GM12878 (cell line): ENCODE measurements at regions of chr6 and their contacts with region 1.

Region 1: GRCh38 chr6:138891255-138891986 is 95.5 kb downstream of the ECT2L start:
- DNase-seq: no peak
- ATAC-seq: no peak
- H3K4me3 ChIP-seq: no peak overlapping the region
- H3K27ac ChIP-seq: no peak overlapping the region
- H3K4me1 ChIP-seq: peaks cover 12% of the 10 kb centered on the region
- H3K27me3 ChIP-seq: no peaks in the 10 kb centered on the region
- CTCF ChIP-seq: no peak
- EP300 ChIP-seq: no peak
- POLR2A ChIP-seq: no peak
- RAD21 ChIP-seq: no peak

Region 2: DNA sequence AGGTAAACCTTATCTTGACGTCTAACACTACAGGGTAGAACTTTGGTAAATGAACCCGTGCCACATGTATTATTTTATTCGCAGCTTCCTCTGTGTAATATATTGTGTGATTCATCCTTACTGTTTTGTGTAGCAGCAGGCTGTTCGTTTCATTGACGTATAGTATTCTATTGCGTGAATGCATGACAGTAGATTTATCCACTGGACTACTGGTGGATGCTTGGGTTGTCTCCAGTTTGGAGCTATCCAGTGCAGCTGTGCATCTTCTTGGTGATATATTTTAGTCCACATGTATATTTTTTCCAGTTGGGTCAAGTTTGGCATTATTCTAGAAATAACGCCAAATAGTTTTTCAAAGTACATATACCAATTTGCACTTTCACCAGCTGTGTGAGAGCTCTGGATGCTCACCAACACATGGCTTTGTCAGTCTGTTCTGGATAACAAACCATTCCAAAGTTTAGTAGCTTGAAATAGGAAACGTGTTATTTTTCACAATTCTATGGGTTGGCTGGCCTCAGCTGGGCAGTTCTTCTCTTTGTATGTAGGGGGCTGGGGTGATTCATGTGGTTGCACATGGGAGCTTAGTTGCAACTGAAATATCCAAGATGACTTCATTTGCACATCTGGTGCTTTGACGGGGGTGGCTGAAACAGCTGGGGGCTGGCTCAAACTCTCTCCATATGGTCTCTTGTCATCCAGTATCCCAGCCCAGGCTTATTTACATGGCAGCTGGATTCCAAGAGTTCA is 86.2 kb before region 1 on chr6:
- CTCF ChIA-PET with region 1: no interaction called
- POLR2A ChIA-PET with region 1: no interaction called
- RAD21 ChIA-PET with region 1: no interaction called
- SMC1A ChIA-PET with region 1: no interaction called
- in situ Hi-C with region 1: no loop called
- intact Hi-C with region 1: no loop called
- DNase-seq: no peak
- ATAC-seq: no peak
- H3K4me3 ChIP-seq: no peak overlapping the region
- H3K27ac ChIP-seq: no peak overlapping the region
- H3K4me1 ChIP-seq: no peaks in the 10 kb centered on the region
- H3K27me3 ChIP-seq: no peaks in the 10 kb centered on the region; a peak in 1 of 4 replicates
- CTCF ChIP-seq: no peak
- EP300 ChIP-seq: no peak
- POLR2A ChIP-seq: no peak
- RAD21 ChIP-seq: no peak

Region 3: GRCh38 chr6:138907167-138907566 is 15.7 kb after region 1 on chr6:
- CTCF ChIA-PET with region 1: interaction called, 3 read pairs
- POLR2A ChIA-PET with region 1: interaction called, 9 read pairs
- RAD21 ChIA-PET with region 1: interaction called, 5 read pairs
- SMC1A ChIA-PET with region 1: interaction called, 13 read pairs
- in situ Hi-C with region 1: no loop called
- intact Hi-C with region 1: no loop called
- DNase-seq: no peak
- ATAC-seq: no peak
- H3K4me3 ChIP-seq: no peak overlapping the region
- H3K27ac ChIP-seq: no peak overlapping the region
- H3K4me1 ChIP-seq: no peaks in the 10 kb centered on the region
- H3K27me3 ChIP-seq: no peaks in the 10 kb centered on the region
- CTCF ChIP-seq: no peak
- EP300 ChIP-seq: no peak
- POLR2A ChIP-seq: no peak
- RAD21 ChIP-seq: no peak

Region 4: DNA sequence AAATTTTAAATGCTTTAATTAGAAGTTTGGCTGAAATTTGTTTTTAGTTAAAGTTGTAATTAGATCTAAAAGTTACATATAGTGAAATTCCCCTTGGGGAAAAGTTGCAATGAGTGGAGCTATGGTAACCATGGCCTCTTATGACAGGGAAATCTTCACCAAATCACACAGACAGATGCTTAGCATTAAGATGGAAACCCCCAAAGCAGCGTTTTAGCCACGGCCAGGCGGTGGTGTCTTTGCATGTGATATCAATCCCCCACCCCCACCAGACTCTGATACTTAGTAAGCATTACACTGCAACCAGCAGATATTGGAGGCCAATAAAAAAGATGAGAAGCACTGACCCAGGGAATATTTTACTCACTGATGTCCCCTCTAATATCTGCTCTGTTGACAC is 20.9 kb after region 1 on chr6:
- CTCF ChIA-PET with region 1: interaction called, 6 read pairs
- POLR2A ChIA-PET with region 1: interaction called, 5 read pairs
- RAD21 ChIA-PET with region 1: interaction called, 5 read pairs
- SMC1A ChIA-PET with region 1: interaction called, 10 read pairs
- in situ Hi-C with region 1: no loop called
- intact Hi-C with region 1: loop called (anchors 1 kb)
- DNase-seq: no peak
- ATAC-seq: peak; percentile 65
- H3K4me3 ChIP-seq: no peak overlapping the region
- H3K27ac ChIP-seq: no peak overlapping the region
- H3K4me1 ChIP-seq: no peaks in the 10 kb centered on the region
- H3K27me3 ChIP-seq: no peaks in the 10 kb centered on the region
- CTCF ChIP-seq: peak in 1 of 3 experiments; percentile 18; a peak in 2 of 6 replicates
- EP300 ChIP-seq: 0 out of 4 replicates have a peak, but pooled peaks of 1 of the 2 experiments have one; percentile 15
- POLR2A ChIP-seq: no peak
- RAD21 ChIP-seq: no peak; the same call in 1 of the 2 replicates

Region 5: GRCh38 chr6:138931660-138932059 is 40.2 kb after region 1 on chr6:
- CTCF ChIA-PET with region 1: interaction called, 3 read pairs
- POLR2A ChIA-PET with region 1: interaction called, 5 read pairs
- RAD21 ChIA-PET with region 1: interaction called, 12 read pairs
- SMC1A ChIA-PET with region 1: interaction called, 9 read pairs
- in situ Hi-C with region 1: no loop called
- intact Hi-C with region 1: no loop called
- DNase-seq: no peak
- ATAC-seq: peak; percentile 69
- H3K4me3 ChIP-seq: no peak overlapping the region
- H3K27ac ChIP-seq: no peak overlapping the region
- H3K4me1 ChIP-seq: no peaks in the 10 kb centered on the region
- H3K27me3 ChIP-seq: no peaks in the 10 kb centered on the region
- CTCF ChIP-seq: no peak
- EP300 ChIP-seq: no peak
- POLR2A ChIP-seq: no peak
- RAD21 ChIP-seq: no peak